A549 (cell line): ENCODE measurements at regions of chr11 and their contacts with region 1.

Region 1: DNA sequence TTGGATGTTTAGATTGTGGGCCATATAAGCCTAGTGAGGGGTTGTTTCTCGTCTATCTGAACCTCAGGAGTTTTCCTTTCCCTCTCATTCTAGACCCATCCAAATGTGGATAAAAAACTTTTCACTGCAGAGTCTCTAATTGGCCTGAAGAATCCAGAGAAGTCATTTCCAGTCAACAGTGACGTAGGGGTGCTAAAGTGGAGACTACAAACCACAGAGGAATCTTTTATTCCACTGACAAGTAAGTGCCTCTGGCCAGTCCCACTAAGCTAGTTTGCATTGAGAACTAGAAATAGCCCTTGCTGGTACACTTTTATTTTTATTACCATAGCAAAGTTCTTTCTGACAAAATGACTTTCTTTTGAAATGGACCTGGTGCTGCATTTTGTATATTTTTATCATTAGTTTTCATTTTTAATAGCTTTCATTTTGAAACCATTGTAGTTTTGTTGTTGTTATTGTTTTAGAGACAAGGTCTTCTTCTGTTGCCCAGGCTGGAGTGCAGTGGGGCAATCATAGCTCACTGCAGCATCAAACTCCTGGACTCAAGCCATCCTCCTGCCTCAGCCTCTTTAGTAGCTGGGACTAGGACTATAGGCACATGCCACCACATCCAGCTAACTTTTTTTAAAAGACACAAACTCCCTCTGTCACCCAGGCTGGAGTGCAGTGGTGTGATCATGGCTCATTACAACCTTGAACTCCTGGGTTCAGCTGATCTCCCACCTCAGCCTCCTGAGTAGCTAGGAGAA is 14.6 kb upstream of the PHLDB1 start:
- DNase-seq: no peak
- ATAC-seq: no peak
- H3K4me3 ChIP-seq: no peak overlapping the region
- H3K27ac ChIP-seq: no peak overlapping the region
- H3K4me1 ChIP-seq: no peaks in the 10 kb centered on the region
- CTCF ChIP-seq: no peak
- EP300 ChIP-seq: no peak
- POLR2A ChIP-seq: no peak
- RAD21 ChIP-seq: no peak

Region 2: DNA sequence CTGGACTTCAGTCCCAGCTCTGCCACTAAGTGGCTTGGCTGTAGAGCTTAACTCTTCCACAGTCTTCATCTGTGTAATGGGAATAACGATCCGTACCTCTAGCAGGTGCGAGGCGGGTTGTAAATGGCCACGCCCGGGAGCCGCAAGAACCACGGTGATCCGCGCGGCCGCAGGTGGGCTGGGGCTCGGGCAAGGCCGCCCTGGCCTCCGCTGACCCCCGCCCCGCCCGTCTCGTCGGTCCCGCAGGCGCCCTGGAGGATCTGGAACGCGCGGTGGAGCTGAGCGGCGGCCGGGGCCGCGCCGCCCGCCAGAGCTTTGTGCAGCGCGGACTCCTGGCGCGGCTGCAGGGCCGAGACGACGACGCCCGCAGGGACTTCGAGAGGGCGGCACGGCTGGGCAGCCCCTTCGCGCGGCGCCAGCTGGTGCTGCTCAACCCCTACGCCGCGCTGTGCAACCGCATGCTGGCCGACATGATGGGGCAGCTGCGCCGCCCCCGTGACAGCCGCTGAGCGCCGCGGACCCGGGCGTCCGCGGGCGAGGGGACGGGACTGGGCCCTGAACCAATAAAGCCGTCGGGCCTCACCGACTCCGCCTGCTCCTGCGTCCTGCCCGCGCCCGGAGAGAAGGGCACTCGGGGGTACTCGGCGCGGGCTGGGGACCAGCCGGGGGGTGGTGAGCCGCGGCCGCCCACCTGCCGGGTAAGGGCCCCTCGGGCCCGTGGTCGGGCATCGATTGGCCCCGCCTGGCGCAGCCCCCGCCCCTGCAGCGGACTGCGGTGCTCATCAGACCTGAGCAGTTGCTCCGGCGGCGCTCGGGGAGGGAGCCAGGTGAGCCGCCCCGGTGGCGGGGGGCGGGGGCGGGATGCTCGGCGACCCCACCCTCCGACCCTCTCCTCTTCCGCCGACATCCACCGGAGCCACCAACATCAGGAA is 62.1 kb before region 1 on chr11 and contains the start of gene TMEM25:
- CTCF ChIA-PET with region 1: no interaction called
- POLR2A ChIA-PET with region 1: no interaction called
- DNase-seq: no peak
- ATAC-seq: peak; percentile 30 to 64; a peak in 4 of 6 replicates
- H3K4me3 ChIP-seq: peak within 1 kb of the TSS; percentile 66
- H3K27ac ChIP-seq: peak within 1 kb of the TSS; percentile 62 to 84; a peak in 5 of 6 replicates
- H3K4me1 ChIP-seq: no peaks in the 10 kb centered on the region
- CTCF ChIP-seq: no peak
- EP300 ChIP-seq: no peak
- POLR2A ChIP-seq: no peak
- RAD21 ChIP-seq: no peak
- polyA plus RNA-seq, gene TMEM25: 0.56 and 0.57 TPM in 2 replicates

Region 3: GRCh38 chr11:118552341-118552740 is 40.5 kb before region 1 on chr11:
- CTCF ChIA-PET with region 1: no interaction called
- POLR2A ChIA-PET with region 1: no interaction called
- DNase-seq: no peak
- ATAC-seq: no peak
- H3K4me3 ChIP-seq: no peak overlapping the region
- H3K27ac ChIP-seq: no peak overlapping the region
- H3K4me1 ChIP-seq: no peaks in the 10 kb centered on the region
- CTCF ChIP-seq: no peak
- EP300 ChIP-seq: no peak
- POLR2A ChIP-seq: no peak
- RAD21 ChIP-seq: no peak

Region 4: DNA sequence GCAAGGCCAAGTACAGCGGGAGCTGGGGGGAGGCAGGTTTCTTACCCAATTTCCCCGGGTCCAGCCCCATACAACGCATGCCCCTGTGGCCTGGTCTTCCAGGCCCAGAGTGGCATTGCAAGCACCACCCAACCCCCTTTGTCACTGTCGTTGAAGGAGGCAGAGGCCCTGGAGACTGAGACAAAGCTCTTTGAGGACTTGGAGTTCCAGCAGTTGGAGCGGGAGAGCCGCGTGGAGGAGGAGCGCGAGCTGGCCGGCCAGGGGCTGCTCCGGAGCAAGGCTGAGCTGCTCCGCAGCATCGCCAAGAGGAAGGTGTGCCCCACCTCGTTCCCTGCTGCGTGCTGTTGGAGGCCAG is 42.4 kb after region 1 on chr11:
- CTCF ChIA-PET with region 1: interaction called, 224 read pairs
- POLR2A ChIA-PET with region 1: no interaction called
- DNase-seq: no peak
- ATAC-seq: no peak
- H3K4me3 ChIP-seq: no peak overlapping the region
- H3K27ac ChIP-seq: no peak overlapping the region
- H3K4me1 ChIP-seq: peaks cover 5% of the 10 kb centered on the region; the same call in 2 of the 3 replicates
- CTCF ChIP-seq: no peak
- EP300 ChIP-seq: no peak
- POLR2A ChIP-seq: no peak
- RAD21 ChIP-seq: no peak